Activated CD4-positive, alpha-beta T cell treated with anti-CD3 and anti-CD28 coated beads for 36 hours (primary cell): ENCODE measurements at regions of chr2 and their contacts with region 1.

Region 1: DNA sequence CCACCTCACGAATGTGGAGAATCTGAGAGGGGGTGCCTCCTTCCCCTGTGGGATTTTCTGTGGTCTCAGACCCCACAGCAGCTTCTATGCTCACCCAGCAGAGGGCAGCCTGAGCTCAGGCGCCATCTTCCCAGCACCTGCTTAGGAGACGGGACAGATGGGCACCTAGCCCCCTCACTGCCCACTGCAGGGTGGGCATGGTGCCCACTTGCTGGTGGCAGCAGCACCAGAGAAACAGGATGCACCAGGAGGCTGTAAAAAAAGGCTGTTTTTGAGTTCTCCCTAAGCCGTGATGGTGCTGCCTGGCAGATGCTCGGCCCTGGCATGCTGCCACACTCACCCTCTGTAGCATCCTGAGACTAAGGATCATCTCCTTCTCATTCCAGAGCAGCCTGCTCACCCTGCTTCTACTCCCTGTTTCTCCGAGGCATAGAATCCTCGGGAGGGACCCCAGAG is 19.1 kb upstream of the SLC20A1 start:
- DNase-seq: peak; percentile 81
- ATAC-seq: peak; percentile 53
- H3K4me3 Mint-ChIP-seq: peak overlapping the region; percentile 50
- H3K27ac Mint-ChIP-seq: peak overlapping the region; percentile 82
- H3K4me1 Mint-ChIP-seq: peaks cover 65% of the 10 kb centered on the region
- H3K27me3 Mint-ChIP-seq: peaks cover 2% of the 10 kb centered on the region

Region 2: GRCh38 chr2:112529757-112530156 is 96.9 kb before region 1 on chr2:
- CTCF ChIA-PET with region 1: no interaction called
- POLR2A ChIA-PET with region 1: no interaction called
- intact Hi-C with region 1: no loop called
- DNase-seq: no peak
- ATAC-seq: no peak
- H3K4me3 Mint-ChIP-seq: no peak overlapping the region
- H3K27ac Mint-ChIP-seq: no peak overlapping the region
- H3K4me1 Mint-ChIP-seq: no peaks in the 10 kb centered on the region
- H3K27me3 Mint-ChIP-seq: no peaks in the 10 kb centered on the region

Region 3: DNA sequence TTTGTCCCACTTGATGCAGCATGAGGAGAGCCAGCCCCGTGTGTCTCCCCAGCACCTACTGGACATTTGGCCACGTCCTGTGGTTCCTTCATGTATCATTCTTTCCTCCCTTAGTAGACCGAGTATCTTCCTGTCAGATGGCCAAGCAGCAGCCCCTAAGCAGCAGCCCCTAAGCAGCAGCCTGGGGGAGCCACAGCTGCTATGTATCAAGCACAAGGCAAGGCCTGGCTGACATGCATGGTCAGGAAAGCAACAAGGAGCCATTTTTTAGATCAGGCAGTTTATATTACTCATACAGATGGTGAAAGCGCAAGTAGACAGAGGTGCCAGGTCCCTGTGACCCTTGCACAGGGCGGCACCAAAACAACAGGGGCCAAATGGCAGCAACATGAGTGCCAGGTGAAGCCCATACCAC is 20.1 kb before region 1 on chr2:
- CTCF ChIA-PET with region 1: interaction called, 30 read pairs
- POLR2A ChIA-PET with region 1: no interaction called
- intact Hi-C with region 1: no loop called
- DNase-seq: no peak
- ATAC-seq: no peak
- H3K4me3 Mint-ChIP-seq: no peak overlapping the region
- H3K27ac Mint-ChIP-seq: no peak overlapping the region
- H3K4me1 Mint-ChIP-seq: no peaks in the 10 kb centered on the region
- H3K27me3 Mint-ChIP-seq: no peaks in the 10 kb centered on the region

Region 4: GRCh38 chr2:112658820-112659667 is 32.4 kb after region 1 on chr2:
- CTCF ChIA-PET with region 1: interaction called, 7 read pairs
- POLR2A ChIA-PET with region 1: interaction called, 5 read pairs
- intact Hi-C with region 1: loop called in 1 of 2 experiments (anchors 1 kb)
- DNase-seq: no peak
- ATAC-seq: no peak
- H3K4me3 Mint-ChIP-seq: no peak overlapping the region
- H3K27ac Mint-ChIP-seq: peak overlapping the region; percentile 47
- H3K4me1 Mint-ChIP-seq: peaks cover 58% of the 10 kb centered on the region
- H3K27me3 Mint-ChIP-seq: no peaks in the 10 kb centered on the region